H1 (cell line): ENCODE measurements at regions of chr11 and their contacts with region 1.

Region 1: GRCh38 chr11:86990515-86990914 is 35.3 kb upstream of the FZD4 start:
- DNase-seq: peak in 1 of 2 experiments; percentile 25
- H3K4me3 ChIP-seq: no peak overlapping the region
- H3K27ac ChIP-seq: no peak overlapping the region
- H3K4me1 ChIP-seq: peaks cover 0 to 2% (median under 1%) of the 10 kb centered on the region in 4 experiments; a peak in 3 of 7 replicates
- H3K27me3 ChIP-seq: no peaks in the 10 kb centered on the region
- CTCF ChIP-seq: no peak
- EP300 ChIP-seq: no peak
- POLR2A ChIP-seq: no peak
- RAD21 ChIP-seq: no peak

Region 2: GRCh38 chr11:86497181-86497701 is 493.3 kb before region 1 on chr11:
- CTCF ChIA-PET with region 1: no interaction called
- POLR2A ChIA-PET with region 1: no interaction called
- DNase-seq: no peak
- H3K4me3 ChIP-seq: no peak overlapping the region
- H3K27ac ChIP-seq: no peak overlapping the region
- H3K4me1 ChIP-seq: peaks cover 3 to 11% (median 5%) of the 10 kb centered on the region in 4 experiments; a peak in 4 of 7 replicates
- H3K27me3 ChIP-seq: no peaks in the 10 kb centered on the region
- CTCF ChIP-seq: no peak
- EP300 ChIP-seq: no peak
- POLR2A ChIP-seq: no peak
- RAD21 ChIP-seq: no peak

Region 3: GRCh38 chr11:86848861-86849260 is 141.7 kb before region 1 on chr11:
- CTCF ChIA-PET with region 1: no interaction called
- POLR2A ChIA-PET with region 1: no interaction called
- DNase-seq: no peak
- H3K4me3 ChIP-seq: no peak overlapping the region
- H3K27ac ChIP-seq: no peak overlapping the region
- H3K4me1 ChIP-seq: no peaks in the 10 kb centered on the region
- H3K27me3 ChIP-seq: no peaks in the 10 kb centered on the region
- CTCF ChIP-seq: no peak
- EP300 ChIP-seq: no peak
- POLR2A ChIP-seq: no peak
- RAD21 ChIP-seq: no peak

Region 4: DNA sequence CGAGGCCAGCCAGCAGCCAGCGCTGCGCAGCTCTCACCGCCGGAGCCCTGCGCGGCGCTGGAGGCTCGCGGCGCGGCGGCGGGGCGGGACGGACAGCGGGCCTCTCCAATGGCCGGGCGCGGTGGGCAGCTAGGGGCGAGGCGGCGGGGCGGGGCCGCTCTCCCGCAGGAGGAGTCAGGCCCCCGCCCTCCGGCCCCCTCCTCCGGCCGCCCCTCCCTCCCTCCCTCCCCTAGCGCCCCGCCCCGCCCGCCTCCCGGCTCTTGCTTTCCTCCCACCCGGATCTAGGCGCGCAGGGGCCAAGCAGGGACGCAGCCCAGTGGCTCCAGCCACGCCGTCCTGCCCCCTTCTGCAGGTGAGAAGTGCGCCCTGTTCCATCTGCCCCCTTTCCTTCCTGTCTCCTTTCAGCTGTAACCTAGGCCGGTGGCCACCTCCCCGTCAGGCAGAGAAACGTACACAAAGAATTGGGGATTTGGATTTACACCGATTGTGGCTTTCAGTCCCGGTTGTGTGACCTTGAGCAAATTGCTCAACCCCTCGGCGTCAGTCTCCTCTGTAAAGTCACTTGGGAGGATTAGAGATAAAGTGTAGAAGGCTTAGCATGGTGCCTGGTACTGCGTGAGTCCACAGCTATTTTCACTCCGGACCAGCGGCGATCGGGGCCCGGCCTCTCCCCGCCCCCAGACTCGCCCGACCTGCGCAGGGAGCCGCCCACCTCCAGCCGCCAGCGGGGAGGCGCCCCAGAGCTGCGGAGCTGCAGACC is 35.0 kb before region 1 on chr11 and contains the start of gene FZD4:
- CTCF ChIA-PET with region 1: interaction called, 11 read pairs
- POLR2A ChIA-PET with region 1: interaction called, 6 read pairs
- DNase-seq: peak in 1 of 2 experiments; percentile 88
- H3K4me3 ChIP-seq: peak within 1 kb of the TSS; percentile 80 to 96 (median 81)
- H3K27ac ChIP-seq: no peak within 1 kb of the TSS; the same call in 1 of the 2 replicates
- H3K4me1 ChIP-seq: peaks cover 0 to 15% (median 10%) of the 10 kb centered on the region in 4 experiments; a peak in 4 of 7 replicates
- H3K27me3 ChIP-seq: peaks cover 5 to 10% (median 8%) of the 10 kb centered on the region in 4 experiments
- CTCF ChIP-seq: peak in 2 of 3 experiments; percentile 10 to 22; a peak in 3 of 4 replicates
- EP300 ChIP-seq: no peak
- POLR2A ChIP-seq: peak; percentile 59 to 61; a peak in 2 of 3 replicates
- RAD21 ChIP-seq: peak; percentile 45 to 52; a peak in 3 of 4 replicates
- total RNA-seq, gene FZD4: 6.8 and 7.1 TPM in 2 replicates

Region 5: DNA sequence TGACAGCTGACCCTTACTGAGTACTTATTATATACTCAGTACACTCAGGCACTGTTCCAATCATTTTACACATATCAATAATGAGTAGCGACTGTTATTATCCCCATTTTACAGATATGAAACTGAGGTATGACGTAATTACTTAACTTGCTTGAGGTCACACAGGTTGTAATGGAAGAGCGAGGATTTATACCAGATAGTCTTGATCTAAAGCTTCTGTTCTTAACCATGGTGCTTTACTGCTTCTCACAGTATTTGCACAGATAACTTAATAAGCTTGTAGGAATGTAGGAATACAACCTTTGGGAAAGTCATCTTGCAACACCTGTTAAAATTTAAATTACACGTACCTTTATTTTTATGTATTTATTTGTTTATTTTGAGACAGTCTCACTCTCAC is 15.5 kb after region 1 on chr11:
- CTCF ChIA-PET with region 1: interaction called, 19 read pairs
- POLR2A ChIA-PET with region 1: no interaction called
- DNase-seq: no peak
- H3K4me3 ChIP-seq: no peak overlapping the region
- H3K27ac ChIP-seq: no peak overlapping the region
- H3K4me1 ChIP-seq: no peaks in the 10 kb centered on the region
- H3K27me3 ChIP-seq: no peaks in the 10 kb centered on the region
- CTCF ChIP-seq: no peak
- EP300 ChIP-seq: no peak
- POLR2A ChIP-seq: no peak
- RAD21 ChIP-seq: no peak

Region 6: DNA sequence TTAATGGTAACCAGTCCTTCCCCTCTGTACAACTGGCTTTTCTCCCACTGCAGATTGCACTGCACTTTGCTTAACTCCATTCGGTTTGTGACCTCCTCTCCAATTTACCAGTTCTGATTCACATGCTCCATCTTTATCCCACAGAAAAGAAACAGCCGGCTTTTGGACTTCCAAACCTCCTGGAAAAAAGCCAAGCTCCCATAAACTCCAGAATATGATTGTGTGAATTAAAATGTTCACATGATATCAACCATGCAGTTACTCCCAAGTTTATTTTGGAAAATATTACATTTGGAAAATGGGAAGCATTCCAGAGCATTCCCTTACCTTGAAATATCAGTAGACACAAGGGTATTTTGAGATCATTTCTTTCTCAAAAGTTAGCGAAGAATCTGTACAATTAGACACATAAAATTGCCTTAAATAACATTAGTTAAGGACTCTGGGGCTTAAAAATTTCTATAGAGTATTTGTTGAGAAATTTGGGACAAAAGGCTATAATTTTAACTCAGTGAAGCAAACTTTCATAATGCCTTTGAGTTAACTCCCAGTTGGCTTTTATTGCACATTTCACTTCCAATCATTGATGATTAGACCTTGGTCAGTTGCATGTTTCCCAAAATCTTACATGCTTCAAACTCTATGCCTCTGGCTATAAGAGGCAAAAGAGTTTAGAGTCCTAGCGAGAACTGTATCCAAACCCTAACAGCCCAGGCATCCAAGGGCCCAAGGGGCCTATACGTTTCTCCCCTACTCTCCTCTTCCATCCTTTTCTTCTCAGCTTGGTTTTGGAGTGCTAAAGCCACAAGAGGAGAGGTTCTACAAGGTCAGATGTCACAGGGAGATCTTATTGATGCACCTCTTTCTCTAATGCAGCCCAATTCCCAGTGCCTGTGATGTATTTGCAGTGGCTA is 23.7 kb after region 1 on chr11:
- CTCF ChIA-PET with region 1: interaction called, 11 read pairs
- POLR2A ChIA-PET with region 1: no interaction called
- DNase-seq: no peak
- H3K4me3 ChIP-seq: no peak overlapping the region
- H3K27ac ChIP-seq: no peak overlapping the region
- H3K4me1 ChIP-seq: no peaks in the 10 kb centered on the region
- H3K27me3 ChIP-seq: no peaks in the 10 kb centered on the region; a peak in 1 of 7 replicates
- CTCF ChIP-seq: no peak
- EP300 ChIP-seq: no peak
- POLR2A ChIP-seq: no peak
- RAD21 ChIP-seq: no peak

Region 7: GRCh38 chr11:87043894-87044293 is 53.4 kb after region 1 on chr11:
- CTCF ChIA-PET with region 1: no interaction called
- POLR2A ChIA-PET with region 1: no interaction called
- DNase-seq: no peak
- H3K4me3 ChIP-seq: no peak overlapping the region
- H3K27ac ChIP-seq: no peak overlapping the region
- H3K4me1 ChIP-seq: peaks cover 0 to 6% (median 0%) of the 10 kb centered on the region in 4 experiments; a peak in 3 of 7 replicates
- H3K27me3 ChIP-seq: no peaks in the 10 kb centered on the region
- CTCF ChIP-seq: no peak
- EP300 ChIP-seq: no peak
- POLR2A ChIP-seq: no peak
- RAD21 ChIP-seq: no peak

Region 8: DNA sequence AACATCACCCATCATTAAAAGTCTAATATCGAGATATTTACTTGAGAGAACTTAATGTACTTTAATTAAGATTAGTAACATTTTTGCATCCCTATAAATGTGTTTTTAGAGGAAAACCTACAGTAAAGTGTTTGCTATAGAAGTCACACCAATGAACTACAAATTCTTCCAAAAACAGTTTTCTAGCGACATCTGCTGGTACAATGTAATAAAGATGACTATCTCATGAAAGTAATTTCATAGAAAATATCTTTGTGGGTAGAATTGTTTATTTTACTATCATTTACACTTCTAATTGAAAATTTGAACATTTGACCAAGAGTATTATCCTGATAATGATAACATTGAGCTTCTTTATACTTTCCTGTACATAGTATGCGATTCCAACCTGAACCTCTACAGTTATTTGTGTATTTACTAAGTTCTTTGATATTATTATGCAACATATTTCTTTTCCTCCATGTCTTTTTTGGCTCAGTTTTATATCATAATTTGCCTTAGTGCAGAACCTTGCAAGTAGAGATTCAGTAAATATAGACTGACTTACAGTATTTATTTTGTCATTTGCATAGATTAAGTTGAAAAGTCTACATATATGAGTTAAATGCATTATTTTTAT is 299.9 kb after region 1 on chr11:
- CTCF ChIA-PET with region 1: interaction called, 10 read pairs
- POLR2A ChIA-PET with region 1: no interaction called
- DNase-seq: no peak
- H3K4me3 ChIP-seq: no peak overlapping the region
- H3K27ac ChIP-seq: no peak overlapping the region
- H3K4me1 ChIP-seq: peaks cover 0 to 9% (median 4%) of the 10 kb centered on the region in 4 experiments; a peak in 3 of 7 replicates
- H3K27me3 ChIP-seq: no peaks in the 10 kb centered on the region
- CTCF ChIP-seq: peak in 2 of 3 experiments; percentile 29 to 44; a peak in 2 of 4 replicates
- EP300 ChIP-seq: no peak
- POLR2A ChIP-seq: no peak
- RAD21 ChIP-seq: peak; percentile 67 to 80